SK-N-SH (cell line): ENCODE measurements at regions of chr15 and their contacts with region 1.

Region 1: GRCh38 chr15:46091860-46092450 is 457.1 kb downstream of the SQOR start:
- DNase-seq: peak; percentile 49
- H3K4me3 ChIP-seq: no peak overlapping the region; a peak in 1 of 4 replicates
- H3K27ac ChIP-seq: no peak overlapping the region
- H3K4me1 ChIP-seq: no peaks in the 10 kb centered on the region; a peak in 3 of 4 replicates
- H3K27me3 ChIP-seq: no peaks in the 10 kb centered on the region
- CTCF ChIP-seq: peak; percentile 44
- EP300 ChIP-seq: no peak
- RAD21 ChIP-seq: peak; percentile 83

Region 2: GRCh38 chr15:46080016-46080415 is 11.9 kb before region 1 on chr15:
- CTCF ChIA-PET with region 1: interaction called, 17 read pairs
- POLR2A ChIA-PET with region 1: no interaction called
- DNase-seq: peak; percentile 61
- H3K4me3 ChIP-seq: no peak overlapping the region
- H3K27ac ChIP-seq: peak overlapping the region in 1 of 2 experiments; percentile 99; a peak in 2 of 4 replicates
- H3K4me1 ChIP-seq: peaks cover 0 to 17% of the 10 kb centered on the region in 2 experiments; a peak in 3 of 4 replicates
- H3K27me3 ChIP-seq: no peaks in the 10 kb centered on the region
- CTCF ChIP-seq: no peak
- EP300 ChIP-seq: peak in 1 of 2 experiments; percentile 89; a peak in 2 of 4 replicates
- RAD21 ChIP-seq: peak; percentile 35

Region 3: GRCh38 chr15:46280762-46281542 is 189.0 kb after region 1 on chr15:
- CTCF ChIA-PET with region 1: interaction called, 12 read pairs
- POLR2A ChIA-PET with region 1: no interaction called
- DNase-seq: peak; percentile 23
- H3K4me3 ChIP-seq: no peak overlapping the region
- H3K27ac ChIP-seq: no peak overlapping the region
- H3K4me1 ChIP-seq: peaks cover 0 to 6% of the 10 kb centered on the region in 2 experiments; a peak in 2 of 4 replicates
- H3K27me3 ChIP-seq: no peaks in the 10 kb centered on the region
- CTCF ChIP-seq: 0 out of 2 replicates have a peak, but pooled peaks have one; percentile 8
- EP300 ChIP-seq: no peak
- RAD21 ChIP-seq: peak; percentile 81